ENCODE measurements at regions of chr2 and their contacts with region 1.

Region 1: DNA sequence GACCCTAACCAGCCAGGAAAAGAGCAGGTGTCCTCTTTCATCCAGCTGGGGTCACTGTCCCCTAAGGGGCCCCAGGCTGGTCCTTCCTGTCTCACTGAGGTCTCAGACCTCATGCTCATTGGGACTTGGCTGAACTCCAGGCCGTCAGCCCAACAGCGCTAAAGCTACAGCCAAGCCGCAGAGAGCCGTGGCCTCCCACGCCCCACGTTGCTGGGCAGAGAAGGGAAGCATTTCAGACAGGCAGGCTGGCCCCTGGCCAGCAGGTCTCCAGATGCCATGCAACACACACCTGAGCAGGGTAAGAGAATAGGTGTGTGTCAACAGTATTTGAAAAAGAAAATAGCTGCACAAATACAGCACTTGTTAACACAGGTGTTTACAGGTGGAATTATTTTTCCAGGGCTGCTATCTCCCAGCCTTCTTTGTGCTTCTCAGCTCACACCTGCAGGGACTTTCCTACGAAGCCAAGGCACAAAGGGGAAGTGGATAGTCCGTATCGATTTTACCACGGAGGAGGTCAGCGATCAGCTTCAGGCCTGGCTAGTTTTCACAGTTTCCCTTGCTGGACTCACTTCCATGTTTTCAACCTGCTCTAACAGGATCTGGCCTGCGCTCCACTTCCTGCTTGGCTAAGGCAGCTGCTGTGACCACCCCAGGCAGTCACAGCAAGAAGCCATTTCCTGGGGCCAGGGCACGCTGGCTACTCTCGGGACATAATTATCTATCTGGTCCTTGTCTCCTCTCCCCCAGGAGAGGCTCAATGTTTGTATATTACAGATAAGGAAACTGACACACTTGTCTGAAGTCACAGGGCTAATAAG is 156.1 kb upstream of the ID2 start:
- DNase-seq: peak; percentile 73 to 85 (median 83)
- H3K4me3 ChIP-seq: peak overlapping the region in 4 of 7 experiments; percentile 15 to 29 (median 24)
- H3K27ac ChIP-seq: peak overlapping the region in 1 of 2 experiments; percentile 45
- H3K4me1 ChIP-seq: peaks cover 3 to 68% (median 45%) of the 10 kb centered on the region in 4 experiments
- H3K27me3 ChIP-seq: no peaks in the 10 kb centered on the region

Region 2: DNA sequence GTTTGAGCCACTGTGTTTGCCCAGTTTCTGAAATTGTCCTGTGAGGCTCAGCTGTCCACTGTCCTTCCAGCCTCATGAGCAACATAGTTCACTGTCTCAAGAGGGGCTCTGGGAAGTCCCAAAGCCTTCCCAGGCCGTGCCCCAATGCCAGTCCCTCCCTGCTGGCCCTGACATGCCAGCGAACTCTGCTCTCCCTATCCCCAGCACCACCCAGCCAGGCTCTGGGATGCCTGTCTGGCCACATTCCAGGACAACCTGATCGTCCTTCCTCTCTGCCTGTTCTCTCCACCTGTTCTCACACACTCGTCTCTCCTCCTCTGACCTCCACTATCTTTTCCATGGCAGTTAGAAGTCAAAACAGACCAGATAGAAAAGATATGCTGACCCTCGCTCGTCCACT is 121.9 kb before region 1 on chr2:
- CTCF ChIA-PET with region 1: no interaction called
- POLR2A ChIA-PET with region 1: no interaction called
- DNase-seq: no peak
- H3K4me3 ChIP-seq: no peak overlapping the region
- H3K27ac ChIP-seq: no peak overlapping the region
- H3K4me1 ChIP-seq: peaks cover 0 to 7% (median 3%) of the 10 kb centered on the region in 4 experiments
- H3K27me3 ChIP-seq: no peaks in the 10 kb centered on the region

Region 3: GRCh38 chr2:8539743-8540551 is 14.2 kb after region 1 on chr2:
- CTCF ChIA-PET with region 1: interaction called, 18 read pairs
- POLR2A ChIA-PET with region 1: interaction called, 9 read pairs
- DNase-seq: peak in 1 of 3 donors; percentile 26
- H3K4me3 ChIP-seq: no peak overlapping the region
- H3K27ac ChIP-seq: no peak overlapping the region
- H3K4me1 ChIP-seq: peaks cover 27 to 100% (median 97%) of the 10 kb centered on the region in 4 experiments
- H3K27me3 ChIP-seq: no peaks in the 10 kb centered on the region

Region 4: DNA sequence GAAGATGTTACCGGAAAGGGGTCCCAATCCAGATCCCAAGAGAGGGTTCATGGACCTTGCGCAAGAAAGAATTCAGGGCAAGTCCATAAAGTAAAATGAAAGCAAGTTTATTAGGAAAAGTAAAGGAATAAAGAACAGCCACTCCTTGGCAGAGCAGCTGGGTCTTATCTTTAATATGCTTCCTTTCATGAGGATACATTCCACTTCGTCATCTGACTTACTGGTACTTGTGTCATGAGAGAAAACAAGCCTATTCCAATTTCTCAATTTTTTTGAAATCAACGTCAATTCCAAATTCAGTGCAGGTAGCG is 95.2 kb after region 1 on chr2:
- CTCF ChIA-PET with region 1: no interaction called
- POLR2A ChIA-PET with region 1: no interaction called
- DNase-seq: no peak
- H3K4me3 ChIP-seq: no peak overlapping the region
- H3K27ac ChIP-seq: no peak overlapping the region
- H3K4me1 ChIP-seq: no peaks in the 10 kb centered on the region
- H3K27me3 ChIP-seq: no peaks in the 10 kb centered on the region